Activated CD4-positive, alpha-beta T cell treated with anti-CD3 and anti-CD28 coated beads for 36 hours (primary cell): ENCODE measurements at regions of chr9 and their contacts with region 1.

Region 1: GRCh38 chr9:2800393-2801179 is 43.3 kb downstream of the PUM3 start:
- DNase-seq: no peak
- ATAC-seq: no peak
- H3K4me3 Mint-ChIP-seq: no peak overlapping the region
- H3K27ac Mint-ChIP-seq: no peak overlapping the region
- H3K4me1 Mint-ChIP-seq: peaks cover 17% of the 10 kb centered on the region
- H3K27me3 Mint-ChIP-seq: no peaks in the 10 kb centered on the region

Region 2: GRCh38 chr9:2837915-2838314 is 37.3 kb after region 1 on chr9:
- CTCF ChIA-PET with region 1: no interaction called
- POLR2A ChIA-PET with region 1: no interaction called
- intact Hi-C with region 1: loop called in 1 of 2 experiments (anchors 5 kb)
- DNase-seq: no peak
- ATAC-seq: no peak
- H3K4me3 Mint-ChIP-seq: no peak overlapping the region
- H3K27ac Mint-ChIP-seq: peak overlapping the region; percentile 77
- H3K4me1 Mint-ChIP-seq: peaks cover 15% of the 10 kb centered on the region
- H3K27me3 Mint-ChIP-seq: no peaks in the 10 kb centered on the region